GM13976 (cell line): ENCODE measurements at regions of chrX and their contacts with region 1.

Region 1: GRCh38 chrX:79263550-79263949 is 103.6 kb downstream of the ITM2A start:
- DNase-seq: no peak
- CTCF ChIP-seq: no peak

Region 2: GRCh38 chrX:78555401-78555980 is 708.1 kb before region 1 on chrX:
- in situ Hi-C with region 1: loop called (anchors 5 kb)
- DNase-seq: peak; percentile 2
- CTCF ChIP-seq: no peak